GM12878 (cell line): ENCODE measurements at regions of chr10 and their contacts with region 1.

Region 1: DNA sequence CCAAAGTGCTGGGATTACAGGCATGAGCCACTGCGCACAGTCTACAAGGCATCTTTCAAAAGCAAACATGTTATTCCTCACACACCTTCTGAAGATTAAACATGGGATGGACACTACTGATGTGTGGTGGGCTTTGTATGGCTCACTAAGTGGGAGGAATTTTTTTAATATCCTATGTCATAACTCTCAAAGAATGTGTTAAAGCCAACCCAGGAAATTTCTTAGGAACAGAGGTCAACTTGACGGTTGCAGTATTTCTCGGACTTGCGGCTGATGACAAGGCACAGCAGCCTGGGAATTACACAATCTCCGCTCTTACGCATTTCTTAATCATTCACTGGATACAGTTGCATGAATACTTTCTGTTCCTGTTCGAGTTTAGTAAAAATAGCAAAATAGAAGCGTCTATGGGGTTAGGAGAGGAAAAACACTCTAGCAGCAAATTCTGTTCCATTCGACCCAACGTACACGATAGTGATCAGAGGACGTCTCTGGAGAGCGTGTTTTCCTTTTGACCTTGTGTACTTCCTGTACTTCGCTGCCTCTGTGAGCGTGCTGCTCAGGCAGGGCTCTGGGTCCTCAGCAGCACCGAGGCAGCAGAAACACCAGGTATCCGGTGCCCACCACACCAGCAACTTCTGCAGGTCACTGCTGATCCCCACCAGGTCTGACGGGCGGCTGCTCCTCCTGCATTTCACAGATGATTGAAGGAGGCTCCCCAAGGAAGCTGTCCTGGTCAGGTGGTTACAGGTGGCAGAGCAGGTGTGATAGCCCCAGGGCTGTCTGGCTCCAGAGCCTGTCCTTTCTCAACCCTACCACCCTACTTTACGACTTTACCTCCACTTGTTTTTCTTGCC is 26.4 kb upstream of the SRGN start:
- DNase-seq: no peak
- ATAC-seq: peak; percentile 65
- H3K4me3 ChIP-seq: peak overlapping the region; percentile 44; the same call in 1 of the 2 replicates
- H3K27ac ChIP-seq: peak overlapping the region; percentile 74
- H3K4me1 ChIP-seq: peaks cover 49% of the 10 kb centered on the region
- H3K27me3 ChIP-seq: no peaks in the 10 kb centered on the region
- CTCF ChIP-seq: no peak
- EP300 ChIP-seq: peak in 1 of 2 experiments; percentile 70; a peak in 2 of 4 replicates
- POLR2A ChIP-seq: peak; percentile 67
- RAD21 ChIP-seq: no peak

Region 2: GRCh38 chr10:69025370-69025896 is 36.1 kb before region 1 on chr10:
- CTCF ChIA-PET with region 1: interaction called, 4 read pairs
- POLR2A ChIA-PET with region 1: interaction called, 5 read pairs
- RAD21 ChIA-PET with region 1: interaction called, 11 read pairs
- SMC1A ChIA-PET with region 1: interaction called, 16 read pairs
- in situ Hi-C with region 1: no loop called
- intact Hi-C with region 1: no loop called
- DNase-seq: no peak
- ATAC-seq: no peak
- H3K4me3 ChIP-seq: no peak overlapping the region
- H3K27ac ChIP-seq: no peak overlapping the region
- H3K4me1 ChIP-seq: peaks cover 16% of the 10 kb centered on the region
- H3K27me3 ChIP-seq: no peaks in the 10 kb centered on the region
- CTCF ChIP-seq: no peak
- EP300 ChIP-seq: no peak
- POLR2A ChIP-seq: no peak
- RAD21 ChIP-seq: no peak

Region 3: GRCh38 chr10:69033256-69033655 is 28.3 kb before region 1 on chr10:
- CTCF ChIA-PET with region 1: interaction called, 3 read pairs
- POLR2A ChIA-PET with region 1: interaction called, 5 read pairs
- RAD21 ChIA-PET with region 1: interaction called, 3 read pairs
- SMC1A ChIA-PET with region 1: interaction called, 16 read pairs
- in situ Hi-C with region 1: no loop called
- intact Hi-C with region 1: no loop called
- DNase-seq: no peak
- ATAC-seq: no peak
- H3K4me3 ChIP-seq: no peak overlapping the region
- H3K27ac ChIP-seq: no peak overlapping the region
- H3K4me1 ChIP-seq: no peaks in the 10 kb centered on the region
- H3K27me3 ChIP-seq: no peaks in the 10 kb centered on the region
- CTCF ChIP-seq: no peak
- EP300 ChIP-seq: no peak
- POLR2A ChIP-seq: no peak
- RAD21 ChIP-seq: no peak

Region 4: DNA sequence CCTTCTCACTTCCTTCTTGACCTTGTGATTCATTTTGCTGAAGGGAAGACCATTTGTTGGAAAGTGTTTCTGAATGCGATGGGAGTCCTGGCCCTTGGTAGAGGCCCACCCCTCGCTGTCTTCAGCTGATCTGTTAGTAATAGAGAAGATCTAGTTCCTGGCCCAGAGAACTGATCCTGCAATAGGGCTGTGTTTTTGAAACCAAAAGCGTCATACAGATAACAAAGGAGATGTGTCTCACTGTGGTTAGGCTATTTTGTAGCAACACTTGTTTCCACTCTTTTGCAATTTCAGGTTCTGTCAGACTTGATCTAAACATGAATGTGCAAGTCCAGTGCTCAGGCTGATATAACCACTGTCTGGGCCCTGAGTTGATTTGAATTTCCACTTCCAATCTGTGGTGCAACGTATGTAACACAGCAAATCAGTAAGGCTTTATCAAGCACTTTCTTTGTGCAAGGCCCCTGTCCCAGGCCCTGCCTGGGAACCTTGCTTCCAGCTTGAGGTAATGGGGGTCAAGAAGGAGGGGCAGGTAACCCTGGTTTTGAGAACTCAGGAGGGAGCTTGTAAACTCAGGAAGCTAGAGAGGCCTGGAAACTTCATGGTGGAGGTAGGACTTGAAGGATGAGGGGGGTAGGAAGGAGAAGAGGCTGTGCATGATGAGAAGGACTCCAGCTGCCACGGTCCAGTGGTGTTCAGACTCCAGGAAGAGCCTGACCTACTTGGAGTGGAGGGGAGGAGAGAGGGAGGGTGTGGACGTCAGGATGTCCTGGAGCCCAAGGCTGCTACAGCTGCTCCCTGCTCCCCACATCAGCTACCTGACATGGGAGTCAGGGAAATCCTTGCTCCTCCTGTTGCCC is 15.9 kb before region 1 on chr10:
- CTCF ChIA-PET with region 1: interaction called, 121 read pairs
- POLR2A ChIA-PET with region 1: interaction called, 231 read pairs
- RAD21 ChIA-PET with region 1: interaction called, 197 read pairs
- SMC1A ChIA-PET with region 1: interaction called, 253 read pairs
- in situ Hi-C with region 1: no loop called
- intact Hi-C with region 1: loop called (anchors 2 kb)
- DNase-seq: peak; percentile 93
- ATAC-seq: peak; percentile 81
- H3K4me3 ChIP-seq: peak overlapping the region; percentile 14; the same call in 1 of the 2 replicates
- H3K27ac ChIP-seq: peak overlapping the region; percentile 94
- H3K4me1 ChIP-seq: peaks cover 70% of the 10 kb centered on the region
- H3K27me3 ChIP-seq: no peaks in the 10 kb centered on the region
- CTCF ChIP-seq: no peak
- EP300 ChIP-seq: peak; percentile 78 to 84; a peak in 3 of 4 replicates
- POLR2A ChIP-seq: peak; percentile 52; the same call in 1 of the 2 replicates
- RAD21 ChIP-seq: no peak; the same call in 1 of the 2 replicates

Region 5: GRCh38 chr10:69051303-69051702 is 10.2 kb before region 1 on chr10:
- CTCF ChIA-PET with region 1: interaction called, 121 read pairs
- POLR2A ChIA-PET with region 1: interaction called, 231 read pairs
- RAD21 ChIA-PET with region 1: interaction called, 197 read pairs
- SMC1A ChIA-PET with region 1: interaction called, 253 read pairs
- in situ Hi-C with region 1: no loop called
- intact Hi-C with region 1: loop called (anchors 1 kb)
- DNase-seq: no peak
- ATAC-seq: peak; percentile 64
- H3K4me3 ChIP-seq: no peak overlapping the region
- H3K27ac ChIP-seq: peak overlapping the region; percentile 85
- H3K4me1 ChIP-seq: peaks cover 89% of the 10 kb centered on the region
- H3K27me3 ChIP-seq: no peaks in the 10 kb centered on the region
- CTCF ChIP-seq: no peak
- EP300 ChIP-seq: peak in 1 of 2 experiments; percentile 87; a peak in 1 of 4 replicates
- POLR2A ChIP-seq: no peak
- RAD21 ChIP-seq: no peak

Region 6: DNA sequence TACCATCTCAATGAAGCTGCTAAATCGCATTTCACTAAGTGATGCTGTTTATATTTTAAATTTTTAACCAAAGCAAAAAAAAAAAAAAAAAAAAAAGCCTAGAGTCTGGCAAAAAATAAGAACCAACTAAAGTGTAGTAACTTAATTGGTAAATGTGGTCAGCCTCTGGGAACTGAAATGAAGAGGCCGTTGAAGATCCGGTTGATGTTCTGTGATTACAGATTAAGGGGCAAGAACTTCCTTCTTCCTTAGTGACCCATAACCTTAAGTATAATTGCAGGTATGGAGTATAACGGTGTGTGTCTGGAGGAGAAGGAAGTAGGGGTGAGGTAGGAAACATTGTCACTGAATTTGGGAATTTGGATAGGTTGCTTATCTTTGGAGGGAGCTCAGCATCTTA is 18.7 kb after region 1 on chr10:
- CTCF ChIA-PET with region 1: interaction called, 21 read pairs
- POLR2A ChIA-PET with region 1: interaction called, 312 read pairs
- RAD21 ChIA-PET with region 1: interaction called, 544 read pairs
- SMC1A ChIA-PET with region 1: interaction called, 355 read pairs
- in situ Hi-C with region 1: no loop called
- intact Hi-C with region 1: no loop called
- DNase-seq: no peak
- ATAC-seq: no peak
- H3K4me3 ChIP-seq: no peak overlapping the region
- H3K27ac ChIP-seq: no peak overlapping the region
- H3K4me1 ChIP-seq: peaks cover 1% of the 10 kb centered on the region; the same call in 1 of the 2 replicates
- H3K27me3 ChIP-seq: no peaks in the 10 kb centered on the region
- CTCF ChIP-seq: no peak
- EP300 ChIP-seq: no peak
- POLR2A ChIP-seq: no peak
- RAD21 ChIP-seq: no peak

Region 7: DNA sequence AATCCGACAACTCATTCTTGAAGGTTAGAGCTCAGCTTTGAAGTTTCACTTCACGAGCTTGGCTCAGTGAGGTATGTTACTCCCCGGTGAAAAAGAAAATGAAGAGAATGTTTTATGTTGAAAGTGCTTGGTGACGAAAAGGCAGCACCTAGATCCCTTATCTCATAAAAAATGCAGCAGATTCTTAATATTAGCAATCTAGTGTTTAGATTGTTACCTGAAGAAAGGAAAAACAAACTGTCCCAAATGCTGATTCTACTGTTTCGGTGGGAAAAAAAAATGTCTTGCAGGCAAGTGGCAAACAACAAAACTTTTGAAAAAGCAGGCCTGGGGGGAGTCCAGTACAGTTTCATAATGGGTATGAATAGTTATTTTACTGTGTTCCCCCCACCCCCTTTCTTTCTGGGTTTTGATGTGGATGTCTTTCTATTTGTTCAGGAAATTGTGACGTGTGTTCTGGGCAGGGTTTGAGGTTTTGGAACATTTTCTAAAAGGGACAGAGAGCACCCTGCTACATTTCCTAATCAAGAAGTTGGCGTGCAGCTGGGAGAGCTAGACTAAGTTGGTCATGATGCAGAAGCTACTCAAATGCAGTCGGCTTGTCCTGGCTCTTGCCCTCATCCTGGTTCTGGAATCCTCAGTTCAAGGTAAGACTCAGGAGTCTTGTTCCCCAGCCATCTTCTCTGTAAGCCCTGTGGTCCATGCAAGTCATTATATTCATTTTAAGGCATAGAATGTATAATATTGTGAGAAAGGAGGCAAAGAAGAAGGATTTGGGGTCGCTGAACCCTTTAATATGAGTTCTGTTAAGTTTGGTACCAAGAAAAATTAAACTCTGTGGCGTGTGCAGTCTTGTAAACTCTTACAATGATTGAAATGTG is 26.3 kb after region 1 on chr10 and contains the start of gene SRGN:
- CTCF ChIA-PET with region 1: interaction called, 66 read pairs
- POLR2A ChIA-PET with region 1: interaction called, 312 read pairs
- RAD21 ChIA-PET with region 1: interaction called, 544 read pairs
- SMC1A ChIA-PET with region 1: interaction called, 355 read pairs
- in situ Hi-C with region 1: no loop called
- intact Hi-C with region 1: loop called (anchors 1 kb)
- DNase-seq: peak; percentile 97
- ATAC-seq: peak; percentile 65
- H3K4me3 ChIP-seq: peak within 1 kb of the TSS; percentile 73
- H3K27ac ChIP-seq: peak within 1 kb of the TSS; percentile 97
- H3K4me1 ChIP-seq: peaks cover 18% of the 10 kb centered on the region
- H3K27me3 ChIP-seq: no peaks in the 10 kb centered on the region
- CTCF ChIP-seq: no peak
- EP300 ChIP-seq: peak; percentile 77 to 87; a peak in 3 of 4 replicates
- POLR2A ChIP-seq: peak; percentile 96
- RAD21 ChIP-seq: no peak
- polyA plus RNA-seq, gene SRGN: 1,115 to 1,176 TPM